ENCODE measurements at regions of chr3 and their contacts with region 1.

Region 1: DNA sequence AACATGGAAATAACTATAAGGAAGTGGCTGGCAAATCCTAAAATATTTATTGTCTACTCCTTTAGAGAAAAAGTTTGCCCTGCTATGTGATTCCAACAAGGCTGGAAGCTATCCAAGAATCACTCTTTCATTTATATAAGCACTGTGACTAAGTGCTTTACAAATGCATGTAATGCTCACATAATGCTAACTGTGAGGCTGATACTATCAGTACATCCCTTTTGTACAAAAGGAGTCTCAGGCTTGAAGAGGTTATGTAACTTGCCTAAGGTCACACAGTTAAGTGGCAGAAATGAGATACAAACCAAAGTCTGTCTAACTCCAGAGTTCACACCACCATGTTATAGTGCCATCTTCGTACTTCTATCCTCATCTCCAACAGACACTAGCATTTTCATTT is 17.0 kb downstream of the TOPBP1 start:
- DNase-seq: peak; percentile 89
- H3K4me3 ChIP-seq: no peak overlapping the region
- H3K27ac ChIP-seq: peak overlapping the region; percentile 36
- H3K4me1 ChIP-seq: peaks cover 37% of the 10 kb centered on the region
- H3K27me3 ChIP-seq: no peaks in the 10 kb centered on the region
- CTCF ChIP-seq: no peak
- POLR2A ChIP-seq: no peak

Region 2: GRCh38 chr3:133230195-133230594 is 414.6 kb before region 1 on chr3:
- CTCF ChIA-PET with region 1: no interaction called
- POLR2A ChIA-PET with region 1: no interaction called
- dilution Hi-C with region 1: no loop called
- intact Hi-C with region 1: no loop called
- DNase-seq: no peak
- H3K4me3 ChIP-seq: no peak overlapping the region
- H3K27ac ChIP-seq: no peak overlapping the region
- H3K4me1 ChIP-seq: no peaks in the 10 kb centered on the region
- H3K27me3 ChIP-seq: no peaks in the 10 kb centered on the region
- CTCF ChIP-seq: no peak
- POLR2A ChIP-seq: no peak

Region 3: DNA sequence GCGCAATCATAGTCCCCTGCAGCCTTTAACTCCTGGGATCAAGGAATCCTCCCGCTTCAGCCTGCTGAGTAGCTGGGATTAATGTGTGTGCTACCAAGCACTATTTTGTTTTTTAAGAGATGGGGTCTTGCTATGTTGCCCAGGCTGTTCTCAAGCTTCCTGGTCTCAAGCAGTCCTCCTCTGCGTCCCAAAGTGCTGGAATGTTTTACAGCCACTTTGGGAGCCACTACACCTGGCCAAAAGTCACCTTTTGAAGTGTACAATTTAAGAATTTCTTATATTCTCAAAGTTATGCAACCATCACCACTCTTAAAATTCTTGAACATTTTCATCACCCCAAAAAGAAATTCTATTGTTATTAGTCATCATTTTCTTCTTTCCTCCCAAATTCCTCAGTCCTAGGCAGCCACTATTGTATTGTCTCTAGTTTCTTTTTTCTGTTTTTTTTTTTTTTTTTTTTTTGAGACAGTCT is 53.5 kb before region 1 on chr3:
- CTCF ChIA-PET with region 1: interaction called, 3 read pairs
- POLR2A ChIA-PET with region 1: no interaction called
- dilution Hi-C with region 1: no loop called
- intact Hi-C with region 1: loop called (anchors 1 kb)
- DNase-seq: peak; percentile 45
- H3K4me3 ChIP-seq: no peak overlapping the region
- H3K27ac ChIP-seq: peak overlapping the region; percentile 72
- H3K4me1 ChIP-seq: peaks cover 29% of the 10 kb centered on the region
- H3K27me3 ChIP-seq: no peaks in the 10 kb centered on the region
- CTCF ChIP-seq: no peak
- POLR2A ChIP-seq: peak; percentile 57